ENCODE measurements at regions of chr6 and their contacts with region 1.

Region 1: GRCh38 chr6:116648156-116648555 is 20.4 kb downstream of the ZUP1 start:
- H3K4me3 Mint-ChIP-seq: no peak overlapping the region
- H3K27ac Mint-ChIP-seq: no peak overlapping the region
- H3K4me1 Mint-ChIP-seq: no peaks in the 10 kb centered on the region
- H3K27me3 Mint-ChIP-seq: no peaks in the 10 kb centered on the region

Region 2: GRCh38 chr6:116218172-116218633 is 430.0 kb before region 1 on chr6:
- intact Hi-C with region 1: loop called (anchors 1 kb)
- H3K4me3 Mint-ChIP-seq: no peak overlapping the region
- H3K27ac Mint-ChIP-seq: no peak overlapping the region
- H3K4me1 Mint-ChIP-seq: peaks cover 5% of the 10 kb centered on the region
- H3K27me3 Mint-ChIP-seq: no peaks in the 10 kb centered on the region

Region 3: GRCh38 chr6:116268589-116269293 is 379.4 kb before region 1 on chr6:
- intact Hi-C with region 1: loop called (anchors 5 kb)
- H3K4me3 Mint-ChIP-seq: no peak overlapping the region
- H3K27ac Mint-ChIP-seq: no peak overlapping the region
- H3K4me1 Mint-ChIP-seq: no peaks in the 10 kb centered on the region
- H3K27me3 Mint-ChIP-seq: no peaks in the 10 kb centered on the region

Region 4: GRCh38 chr6:116492331-116493067 is 155.7 kb before region 1 on chr6:
- intact Hi-C with region 1: no loop called
- H3K4me3 Mint-ChIP-seq: no peak overlapping the region
- H3K27ac Mint-ChIP-seq: no peak overlapping the region
- H3K4me1 Mint-ChIP-seq: no peaks in the 10 kb centered on the region
- H3K27me3 Mint-ChIP-seq: no peaks in the 10 kb centered on the region

Region 5: GRCh38 chr6:116586276-116586675 is 61.9 kb before region 1 on chr6:
- intact Hi-C with region 1: loop called (anchors 5 kb)
- H3K4me3 Mint-ChIP-seq: no peak overlapping the region
- H3K27ac Mint-ChIP-seq: no peak overlapping the region
- H3K4me1 Mint-ChIP-seq: no peaks in the 10 kb centered on the region
- H3K27me3 Mint-ChIP-seq: no peaks in the 10 kb centered on the region

Region 6: DNA sequence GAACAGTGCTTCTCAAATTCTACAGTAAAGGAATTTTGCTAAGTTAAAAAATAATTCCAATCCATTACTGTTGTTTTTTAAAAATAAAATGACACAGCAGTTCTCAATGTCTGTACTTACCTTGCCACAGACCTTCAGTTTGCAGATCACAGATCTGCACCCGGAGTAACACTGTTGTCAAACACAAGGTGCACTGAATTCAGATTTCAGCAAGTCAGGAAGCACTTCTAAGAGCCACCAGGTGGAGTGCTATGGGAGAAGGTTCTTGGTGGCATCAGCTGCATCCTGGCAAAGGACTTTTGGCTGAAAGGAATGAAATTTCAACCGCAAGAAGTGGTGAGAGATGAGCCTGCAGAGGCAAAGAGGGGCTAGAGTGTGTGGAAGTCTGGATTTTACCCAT is 14.5 kb before region 1 on chr6:
- intact Hi-C with region 1: no loop called
- H3K4me3 Mint-ChIP-seq: no peak overlapping the region
- H3K27ac Mint-ChIP-seq: no peak overlapping the region
- H3K4me1 Mint-ChIP-seq: peaks cover 13% of the 10 kb centered on the region
- H3K27me3 Mint-ChIP-seq: no peaks in the 10 kb centered on the region